ENCODE measurements at regions of chr19 and their contacts with region 1.

Region 1: DNA sequence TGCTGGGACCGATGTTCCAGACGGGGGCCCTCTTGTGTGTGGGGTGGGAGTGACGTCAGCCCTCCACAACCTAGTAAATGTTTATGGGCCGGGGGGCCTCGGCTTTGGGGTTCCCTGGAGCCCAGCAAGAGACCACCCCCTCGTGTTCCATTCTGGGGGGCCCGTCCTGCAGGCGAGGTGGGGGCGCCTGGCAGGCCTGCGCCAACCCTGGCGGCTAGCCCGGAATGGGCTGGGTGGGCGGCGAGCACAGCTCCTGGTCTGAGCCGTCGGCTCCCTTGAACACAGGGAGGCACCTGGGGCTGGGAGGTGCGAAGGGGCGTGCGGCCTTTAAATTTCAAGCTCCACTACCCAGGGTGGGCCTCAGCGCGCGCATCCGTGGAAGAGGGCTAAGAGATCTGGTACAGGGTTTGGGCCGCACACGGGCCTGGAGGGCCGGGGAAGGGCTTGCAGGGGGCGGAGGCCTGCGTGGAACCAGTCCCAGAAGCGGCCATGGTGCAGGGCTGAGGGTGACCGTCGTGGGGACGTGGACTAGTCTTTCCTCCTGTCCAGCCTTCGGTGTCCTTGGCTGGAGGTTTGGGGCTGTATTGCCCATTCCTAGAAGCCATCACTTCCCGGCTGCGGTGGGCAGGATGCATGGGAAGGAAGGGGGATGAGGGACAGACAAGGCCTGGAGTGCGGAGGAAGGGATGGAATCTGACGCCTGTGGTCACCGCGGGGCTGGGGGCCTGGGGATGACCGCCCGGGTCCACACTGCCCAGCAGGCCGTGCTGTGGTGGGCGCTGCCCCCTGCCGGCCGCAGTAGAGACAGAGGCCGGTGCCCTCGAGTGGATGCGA is 11.4 kb downstream of the NDUFA11 start:
- DNase-seq: peak in 1 of 5 donors; percentile 66
- H3K4me3 ChIP-seq: no peak overlapping the region
- H3K27ac ChIP-seq: no peak overlapping the region
- H3K4me1 ChIP-seq: peaks cover 2% of the 10 kb centered on the region
- H3K27me3 ChIP-seq: no peaks in the 10 kb centered on the region
- CTCF ChIP-seq: no peak
- EP300 ChIP-seq: no peak
- POLR2A ChIP-seq: no peak

Region 2: DNA sequence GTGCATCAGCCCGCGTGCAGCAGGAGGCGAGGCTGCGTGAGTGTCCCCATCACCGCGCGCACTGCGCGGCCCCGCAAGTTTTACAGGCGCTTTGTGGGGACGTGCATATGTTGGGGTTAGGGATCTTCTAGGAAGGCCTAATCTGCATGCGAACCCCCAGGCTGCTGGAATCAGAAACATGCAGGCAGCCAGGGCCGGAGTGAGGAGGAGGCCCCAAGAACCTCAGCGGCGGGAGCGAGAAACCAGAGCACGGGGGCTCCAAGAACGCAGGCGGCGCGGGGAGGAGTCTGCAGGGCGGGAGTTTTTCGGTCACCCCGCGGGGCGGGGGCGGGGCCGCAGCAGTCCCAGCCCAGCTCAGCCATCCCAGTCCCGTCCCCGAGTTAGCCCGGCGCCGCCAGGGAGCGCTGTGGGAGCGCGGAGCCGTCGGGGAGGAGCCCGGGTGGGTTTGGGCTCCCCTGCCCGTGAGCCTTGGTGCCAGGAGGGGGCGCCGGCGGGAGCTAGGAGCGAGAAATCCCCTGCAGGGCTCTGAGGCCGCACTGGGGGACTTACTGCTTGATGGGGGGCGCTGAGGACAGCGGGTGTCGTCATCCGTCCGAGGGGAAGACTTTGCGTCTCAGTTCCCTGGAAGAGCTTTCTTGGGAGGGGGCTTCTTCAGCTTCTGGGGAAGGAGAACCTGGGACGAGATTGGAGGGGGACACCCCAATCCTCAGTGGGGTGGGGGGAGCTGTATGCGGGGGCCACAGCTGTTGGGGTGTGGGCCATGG is 88.2 kb before region 1 on chr19:
- intact Hi-C with region 1: loop called in 2 of 4 experiments (anchors 5 to 10 kb)
- DNase-seq: peak; percentile 46 to 85 (median 68)
- H3K4me3 ChIP-seq: no peak overlapping the region
- H3K27ac ChIP-seq: no peak overlapping the region
- H3K4me1 ChIP-seq: peaks cover 8% of the 10 kb centered on the region
- H3K27me3 ChIP-seq: no peaks in the 10 kb centered on the region
- CTCF ChIP-seq: peak; percentile 35 to 57 (median 48)
- EP300 ChIP-seq: no peak
- POLR2A ChIP-seq: no peak

Region 3: GRCh38 chr19:5926641-5927440 is 34.7 kb after region 1 on chr19:
- intact Hi-C with region 1: no loop called
- DNase-seq: peak in 3 of 5 donors; percentile 34 to 64 (median 62)
- H3K4me3 ChIP-seq: no peak overlapping the region
- H3K27ac ChIP-seq: no peak overlapping the region
- H3K4me1 ChIP-seq: no peaks in the 10 kb centered on the region
- H3K27me3 ChIP-seq: no peaks in the 10 kb centered on the region
- CTCF ChIP-seq: no peak
- EP300 ChIP-seq: no peak
- POLR2A ChIP-seq: no peak

Region 4: GRCh38 chr19:5987077-5987818 is 95.1 kb after region 1 on chr19:
- intact Hi-C with region 1: no loop called
- DNase-seq: peak; percentile 66 to 83 (median 80)
- H3K4me3 ChIP-seq: peak overlapping the region; percentile 21
- H3K27ac ChIP-seq: no peak overlapping the region
- H3K4me1 ChIP-seq: peaks cover 1% of the 10 kb centered on the region
- H3K27me3 ChIP-seq: no peaks in the 10 kb centered on the region
- CTCF ChIP-seq: peak; percentile 75 to 91 (median 85)
- EP300 ChIP-seq: no peak
- POLR2A ChIP-seq: no peak

Region 5: DNA sequence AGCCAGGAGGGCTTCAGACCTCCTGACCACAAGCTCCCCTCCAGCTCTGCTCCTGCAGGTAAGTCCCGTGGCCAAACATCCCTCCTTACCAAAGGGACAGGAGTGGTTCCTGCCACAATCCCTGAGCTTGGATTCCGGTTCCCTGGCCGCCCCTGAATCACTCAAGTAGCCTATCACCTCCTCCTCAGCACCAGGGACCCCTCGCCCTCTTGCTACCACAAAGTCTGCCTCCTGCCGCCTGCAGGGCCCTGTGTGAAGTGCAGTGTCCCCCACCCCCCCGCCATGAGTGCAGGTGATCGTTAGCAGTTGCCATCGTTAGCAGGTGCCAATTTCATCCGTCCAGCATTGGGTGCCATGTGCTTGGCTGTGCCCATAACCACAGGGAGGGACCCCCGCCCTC is 126.6 kb after region 1 on chr19:
- intact Hi-C with region 1: no loop called
- DNase-seq: no peak
- H3K4me3 ChIP-seq: no peak overlapping the region
- H3K27ac ChIP-seq: no peak overlapping the region
- H3K4me1 ChIP-seq: peaks cover 3% of the 10 kb centered on the region
- H3K27me3 ChIP-seq: no peaks in the 10 kb centered on the region
- CTCF ChIP-seq: no peak
- EP300 ChIP-seq: no peak
- POLR2A ChIP-seq: no peak